ENCODE measurements at regions of chr11 and their contacts with region 1.

Region 1: GRCh38 chr11:85694386-85694980 is 8.5 kb upstream of the CCDC89 start:
- DNase-seq: peak; percentile 87
- ATAC-seq: peak; percentile 59
- H3K4me3 ChIP-seq: no peak overlapping the region
- H3K27ac ChIP-seq: peak overlapping the region; percentile 10; the same call in 1 of the 2 replicates
- H3K4me1 ChIP-seq: peaks cover 34% of the 10 kb centered on the region
- H3K27me3 ChIP-seq: no peaks in the 10 kb centered on the region
- CTCF ChIP-seq: peak; percentile 94

Region 2: GRCh38 chr11:85517272-85517671 is 177.2 kb before region 1 on chr11:
- CTCF ChIA-PET with region 1: no interaction called
- POLR2A ChIA-PET with region 1: no interaction called
- intact Hi-C with region 1: no loop called
- DNase-seq: no peak
- ATAC-seq: no peak
- H3K4me3 ChIP-seq: no peak overlapping the region
- H3K27ac ChIP-seq: no peak overlapping the region
- H3K4me1 ChIP-seq: no peaks in the 10 kb centered on the region
- H3K27me3 ChIP-seq: no peaks in the 10 kb centered on the region
- CTCF ChIP-seq: no peak

Region 3: GRCh38 chr11:85748411-85748891 is 54.0 kb after region 1 on chr11:
- CTCF ChIA-PET with region 1: no interaction called
- POLR2A ChIA-PET with region 1: no interaction called
- intact Hi-C with region 1: loop called (anchors 5 kb)
- DNase-seq: peak; percentile 90
- ATAC-seq: peak; percentile 84
- H3K4me3 ChIP-seq: peak overlapping the region; percentile 32
- H3K27ac ChIP-seq: peak overlapping the region; percentile 92
- H3K4me1 ChIP-seq: peaks cover 57% of the 10 kb centered on the region
- H3K27me3 ChIP-seq: no peaks in the 10 kb centered on the region
- CTCF ChIP-seq: no peak

Region 4: DNA sequence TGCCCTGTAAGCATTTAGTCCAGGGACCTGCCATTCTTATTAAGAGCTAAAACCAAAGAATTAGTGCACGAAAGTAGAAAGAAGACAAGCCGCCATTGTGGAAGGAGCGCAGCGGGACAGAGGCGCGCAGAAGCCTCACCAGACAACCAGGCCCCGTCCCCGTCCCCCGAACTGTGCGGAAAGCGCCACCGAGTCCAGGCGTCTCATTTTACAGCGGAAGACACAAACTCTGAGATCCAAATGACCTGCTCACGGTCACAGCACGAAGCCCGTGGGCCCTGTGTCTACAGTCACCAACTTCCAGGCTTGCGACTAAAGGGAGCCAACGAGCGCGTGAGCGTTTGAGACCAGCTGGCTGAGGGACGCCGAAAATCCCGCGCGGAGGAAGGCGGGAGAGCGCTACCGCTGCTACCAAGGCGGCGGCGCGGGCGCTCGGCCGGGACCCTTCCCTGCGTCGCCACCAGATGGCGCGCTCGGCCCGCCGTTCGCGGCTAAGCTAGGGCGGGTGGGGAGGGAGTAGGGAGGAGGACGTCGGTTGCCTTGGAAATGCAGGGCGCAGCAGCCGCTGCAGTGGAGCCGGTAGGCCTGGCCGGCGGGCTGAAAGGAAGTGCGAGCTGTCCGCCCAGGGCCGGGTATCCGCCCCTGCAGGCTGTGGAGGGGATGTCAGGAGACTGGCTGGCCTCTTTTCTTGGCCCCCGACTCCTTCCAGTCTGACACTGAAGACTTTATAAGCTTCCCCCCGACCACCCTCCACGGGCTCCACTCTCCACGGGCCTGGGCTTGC is 160.3 kb after region 1 on chr11:
- CTCF ChIA-PET with region 1: interaction called, 3 read pairs
- POLR2A ChIA-PET with region 1: no interaction called
- intact Hi-C with region 1: loop called (anchors 1 kb)
- DNase-seq: peak; percentile 99
- ATAC-seq: peak; percentile 94
- H3K4me3 ChIP-seq: peak overlapping the region; percentile 78
- H3K27ac ChIP-seq: peak overlapping the region; percentile 84
- H3K4me1 ChIP-seq: peaks cover 17% of the 10 kb centered on the region
- H3K27me3 ChIP-seq: no peaks in the 10 kb centered on the region
- CTCF ChIP-seq: peak; percentile 68

Measured in PC-3 (cell line).